Activated T-helper 1 cell treated with anti-CD3 and anti-CD28 coated beads, Interleukin-12 subunit alpha, Interleukin-12 subunit beta, Interleukin-2, Interleukin-4 antibody, amounts not matched to agents 30 ng/mL and 10 ng/mL and 1 ng/mL, durations not matched to agents 14 hours and 24 hours and 36 hours (primary cell): ENCODE measurements at regions of chr3 and their contacts with region 1.

Region 1: GRCh38 chr3:71583566-71584449 is at the start of gene FOXP1:
- DNase-seq: peak; percentile 37
- H3K4me3 Mint-ChIP-seq: peak within 1 kb of the TSS; percentile 90
- H3K27ac Mint-ChIP-seq: peak within 1 kb of the TSS; percentile 93
- H3K4me1 Mint-ChIP-seq: peaks cover 47% of the 10 kb centered on the region
- H3K27me3 Mint-ChIP-seq: peaks cover 31% of the 10 kb centered on the region
- total RNA-seq, gene FOXP1: 94.8 and 97.6 TPM in 2 replicates

Region 2: GRCh38 chr3:70550723-70551319 is 1033.0 kb before region 1 on chr3:
- intact Hi-C with region 1: loop called (anchors 1 kb)
- DNase-seq: peak; percentile 34
- H3K4me3 Mint-ChIP-seq: no peak overlapping the region
- H3K27ac Mint-ChIP-seq: no peak overlapping the region
- H3K4me1 Mint-ChIP-seq: no peaks in the 10 kb centered on the region
- H3K27me3 Mint-ChIP-seq: peaks cover 17% of the 10 kb centered on the region

Region 3: DNA sequence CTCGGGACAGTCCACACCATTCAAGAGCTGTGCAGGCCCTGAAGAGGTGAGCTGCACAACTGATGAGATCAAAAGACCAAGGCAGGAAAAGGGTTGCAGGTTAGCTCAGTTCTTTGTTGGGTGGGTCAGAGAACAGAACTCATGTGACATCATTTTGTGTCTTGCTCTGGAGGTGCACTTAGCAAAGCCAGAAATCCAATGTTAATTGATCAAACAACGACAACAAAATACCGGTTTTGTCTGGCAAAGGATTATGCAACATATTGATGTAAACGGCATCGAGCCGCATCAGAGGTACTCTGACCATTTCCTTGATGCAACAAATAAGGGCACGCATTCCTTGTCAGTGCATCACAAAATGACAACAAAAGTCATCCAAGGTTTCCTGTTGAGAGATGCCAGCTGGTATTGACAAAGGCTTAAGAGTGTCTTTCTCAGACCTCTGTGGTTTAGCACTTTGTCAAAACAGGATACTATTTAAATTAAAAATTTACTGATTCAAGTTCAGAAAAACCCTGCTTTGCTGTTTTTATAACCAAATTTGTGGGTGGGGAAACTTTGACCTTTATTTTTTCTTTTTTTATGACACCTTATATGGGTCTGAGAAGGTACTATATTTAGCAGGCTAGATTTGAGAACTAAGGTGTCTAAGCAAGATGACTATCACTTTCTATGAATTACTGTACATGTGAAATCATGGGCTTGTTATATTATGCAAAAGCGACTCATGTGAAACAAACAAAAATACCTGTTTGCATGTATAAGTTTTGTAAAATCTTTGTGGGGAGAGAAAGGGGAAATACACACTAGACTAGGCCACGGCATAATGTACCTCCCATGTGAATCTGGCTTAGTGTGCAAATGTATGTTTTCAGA is 496.4 kb before region 1 on chr3:
- intact Hi-C with region 1: loop called (anchors 1 kb)
- DNase-seq: peak; percentile 44
- H3K4me3 Mint-ChIP-seq: peak overlapping the region; percentile 46
- H3K27ac Mint-ChIP-seq: peak overlapping the region; percentile 89
- H3K4me1 Mint-ChIP-seq: peaks cover 77% of the 10 kb centered on the region
- H3K27me3 Mint-ChIP-seq: peaks cover 2% of the 10 kb centered on the region

Region 4: GRCh38 chr3:71360764-71361163 is 223.0 kb before region 1 on chr3:
- intact Hi-C with region 1: loop called (anchors 1 kb)
- DNase-seq: no peak
- H3K4me3 Mint-ChIP-seq: no peak overlapping the region
- H3K27ac Mint-ChIP-seq: peak overlapping the region; percentile 80
- H3K4me1 Mint-ChIP-seq: peaks cover 19% of the 10 kb centered on the region
- H3K27me3 Mint-ChIP-seq: peaks cover 25% of the 10 kb centered on the region

Region 5: GRCh38 chr3:71423151-71423906 is 160.5 kb before region 1 on chr3:
- intact Hi-C with region 1: loop called (anchors 2 kb)
- DNase-seq: no peak
- H3K4me3 Mint-ChIP-seq: no peak overlapping the region
- H3K27ac Mint-ChIP-seq: no peak overlapping the region
- H3K4me1 Mint-ChIP-seq: peaks cover 22% of the 10 kb centered on the region
- H3K27me3 Mint-ChIP-seq: peaks cover 61% of the 10 kb centered on the region

Region 6: DNA sequence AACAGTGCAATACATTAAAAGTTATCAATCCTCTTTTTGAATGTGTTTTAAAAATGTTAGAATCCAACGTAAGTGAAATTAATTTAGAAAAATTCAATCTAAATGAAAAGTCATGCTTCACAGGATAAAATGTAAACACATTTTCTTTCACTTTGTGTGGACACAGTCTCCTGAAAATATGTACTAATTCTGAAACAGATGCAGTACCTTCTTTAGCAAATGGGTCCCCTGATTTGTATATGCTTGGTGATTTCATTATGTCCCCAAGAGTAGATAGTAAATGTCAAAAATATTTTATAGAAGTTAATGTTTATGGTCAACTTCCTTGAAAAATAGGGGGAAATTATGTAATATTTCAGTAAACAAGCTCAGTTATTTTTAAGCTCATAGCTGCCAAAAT is 29.2 kb before region 1 on chr3:
- intact Hi-C with region 1: no loop called
- DNase-seq: no peak
- H3K4me3 Mint-ChIP-seq: no peak overlapping the region
- H3K27ac Mint-ChIP-seq: no peak overlapping the region
- H3K4me1 Mint-ChIP-seq: no peaks in the 10 kb centered on the region
- H3K27me3 Mint-ChIP-seq: peaks cover 9% of the 10 kb centered on the region